Vagina (tissue), 2 donors: ENCODE measurements at regions of chr15 and their contacts with region 1.

Region 1: GRCh38 chr15:94119923-94120775 is 111.2 kb upstream of the MCTP2 start:
- DNase-seq: no peak
- H3K4me3 ChIP-seq: no peak overlapping the region
- H3K27ac ChIP-seq: peak overlapping the region; percentile 63
- H3K4me1 ChIP-seq: peaks cover 18% of the 10 kb centered on the region
- H3K27me3 ChIP-seq: no peaks in the 10 kb centered on the region
- CTCF ChIP-seq: peak; percentile 94 to 98 (median 97)
- POLR2A ChIP-seq: no peak

Region 2: GRCh38 chr15:93030430-93031105 is 1089.6 kb before region 1 on chr15:
- intact Hi-C with region 1: loop called (anchors 5 kb)
- DNase-seq: peak in 1 of 2 donors; percentile 88
- H3K4me3 ChIP-seq: no peak overlapping the region
- H3K27ac ChIP-seq: peak overlapping the region; percentile 79
- H3K4me1 ChIP-seq: peaks cover 49% of the 10 kb centered on the region
- H3K27me3 ChIP-seq: no peaks in the 10 kb centered on the region
- CTCF ChIP-seq: peak; percentile 65 to 90 (median 76)
- POLR2A ChIP-seq: no peak